GM12878 (cell line): ENCODE measurements at regions of chr5 and their contacts with region 1.

Region 1: DNA sequence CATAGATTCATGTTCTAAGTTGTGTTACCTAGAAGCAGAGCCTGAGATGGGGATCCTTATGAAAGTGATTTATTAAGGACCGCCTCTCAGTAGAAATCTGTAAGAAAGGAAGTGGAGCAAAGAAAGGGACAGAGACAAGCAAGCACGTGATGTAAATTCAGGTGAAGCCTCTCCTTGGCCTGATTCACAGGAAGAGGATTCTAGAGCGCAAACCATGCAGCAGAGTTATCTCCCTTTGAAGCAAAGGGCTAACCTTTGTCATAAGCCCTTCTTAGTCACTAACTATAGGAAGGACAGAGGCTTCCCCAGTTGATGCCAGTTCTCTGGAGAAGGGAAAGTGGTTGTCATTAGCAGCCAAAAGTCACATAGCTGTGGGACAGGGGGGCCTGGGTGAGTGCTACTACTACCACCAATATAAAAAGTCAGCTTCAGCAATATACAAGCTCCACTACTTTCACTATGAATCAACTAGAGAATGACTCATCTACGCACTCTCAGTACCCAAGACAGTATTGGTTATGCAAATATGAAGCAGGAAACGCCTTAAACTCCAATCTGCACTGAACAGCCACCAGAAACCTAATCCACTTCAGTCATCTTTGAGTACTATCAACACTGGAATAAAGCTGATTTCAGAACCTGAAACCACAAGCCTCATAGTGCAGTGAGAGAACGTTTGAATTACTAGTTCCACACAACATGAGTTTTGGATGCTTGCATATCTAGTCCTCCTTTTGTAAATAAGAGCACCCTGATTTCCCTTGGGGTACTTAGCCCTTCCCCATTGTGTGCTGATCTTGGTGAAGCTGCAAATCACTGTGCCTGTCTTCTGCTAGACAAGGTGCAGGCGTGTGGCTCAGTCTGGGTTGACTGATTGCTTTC is 162.7 kb downstream of the ZNF608 start:
- DNase-seq: peak; percentile 89
- ATAC-seq: peak; percentile 99
- H3K4me3 ChIP-seq: no peak overlapping the region
- H3K27ac ChIP-seq: peak overlapping the region; percentile 42
- H3K4me1 ChIP-seq: peaks cover 14% of the 10 kb centered on the region; the same call in 1 of the 2 replicates
- H3K27me3 ChIP-seq: peaks cover 0 to 8% of the 10 kb centered on the region in 2 experiments
- CTCF ChIP-seq: no peak
- EP300 ChIP-seq: peak; percentile 59 to 95; a peak in 3 of 4 replicates
- POLR2A ChIP-seq: no peak
- RAD21 ChIP-seq: no peak

Region 2: GRCh38 chr5:124056991-124057723 is 526.6 kb before region 1 on chr5:
- CTCF ChIA-PET with region 1: no interaction called
- POLR2A ChIA-PET with region 1: no interaction called
- RAD21 ChIA-PET with region 1: no interaction called
- SMC1A ChIA-PET with region 1: no interaction called
- in situ Hi-C with region 1: no loop called
- intact Hi-C with region 1: loop called (anchors 5 kb)
- DNase-seq: peak; percentile 47
- ATAC-seq: peak; percentile 76
- H3K4me3 ChIP-seq: peak overlapping the region; percentile 65; the same call in 1 of the 2 replicates
- H3K27ac ChIP-seq: peak overlapping the region; percentile 46
- H3K4me1 ChIP-seq: peaks cover 37% of the 10 kb centered on the region
- H3K27me3 ChIP-seq: no peaks in the 10 kb centered on the region
- CTCF ChIP-seq: no peak
- EP300 ChIP-seq: 0 out of 4 replicates have a peak, but pooled peaks of 1 of the 2 experiments have one; percentile 5
- POLR2A ChIP-seq: no peak
- RAD21 ChIP-seq: no peak

Region 3: GRCh38 chr5:124453221-124454051 is 130.3 kb before region 1 on chr5:
- CTCF ChIA-PET with region 1: no interaction called
- POLR2A ChIA-PET with region 1: no interaction called
- RAD21 ChIA-PET with region 1: no interaction called
- SMC1A ChIA-PET with region 1: interaction called, 3 read pairs
- in situ Hi-C with region 1: no loop called
- intact Hi-C with region 1: loop called (anchors 1 kb)
- DNase-seq: peak; percentile 83
- ATAC-seq: peak; percentile 98
- H3K4me3 ChIP-seq: no peak overlapping the region
- H3K27ac ChIP-seq: peak overlapping the region; percentile 40; the same call in 1 of the 2 replicates
- H3K4me1 ChIP-seq: peaks cover 19% of the 10 kb centered on the region
- H3K27me3 ChIP-seq: no peaks in the 10 kb centered on the region
- CTCF ChIP-seq: no peak
- EP300 ChIP-seq: no peak
- POLR2A ChIP-seq: no peak
- RAD21 ChIP-seq: no peak

Region 4: GRCh38 chr5:124524552-124525232 is 59.0 kb before region 1 on chr5:
- CTCF ChIA-PET with region 1: no interaction called
- POLR2A ChIA-PET with region 1: interaction called, 3 read pairs
- RAD21 ChIA-PET with region 1: no interaction called
- SMC1A ChIA-PET with region 1: no interaction called
- in situ Hi-C with region 1: no loop called
- intact Hi-C with region 1: loop called (anchors 5 kb)
- DNase-seq: peak; percentile 35
- ATAC-seq: peak; percentile 86
- H3K4me3 ChIP-seq: no peak overlapping the region
- H3K27ac ChIP-seq: no peak overlapping the region
- H3K4me1 ChIP-seq: peaks cover 20% of the 10 kb centered on the region
- H3K27me3 ChIP-seq: 0 out of 4 replicates have a peak, but pooled peaks cover 0 to 3% of the 10 kb centered on the region in 2 experiments
- CTCF ChIP-seq: peak; percentile 26 to 50 (median 30); a peak in 5 of 6 replicates
- EP300 ChIP-seq: no peak
- POLR2A ChIP-seq: no peak
- RAD21 ChIP-seq: peak; percentile 67

Region 5: GRCh38 chr5:124599028-124599973 is 15.6 kb after region 1 on chr5:
- CTCF ChIA-PET with region 1: no interaction called
- POLR2A ChIA-PET with region 1: no interaction called
- RAD21 ChIA-PET with region 1: interaction called, 5 read pairs
- SMC1A ChIA-PET with region 1: interaction called, 12 read pairs
- in situ Hi-C with region 1: no loop called
- intact Hi-C with region 1: no loop called
- DNase-seq: peak; percentile 13
- ATAC-seq: peak; percentile 42
- H3K4me3 ChIP-seq: no peak overlapping the region
- H3K27ac ChIP-seq: no peak overlapping the region
- H3K4me1 ChIP-seq: no peaks in the 10 kb centered on the region
- H3K27me3 ChIP-seq: no peaks in the 10 kb centered on the region; a peak in 2 of 4 replicates
- CTCF ChIP-seq: no peak
- EP300 ChIP-seq: no peak
- POLR2A ChIP-seq: no peak
- RAD21 ChIP-seq: no peak

Region 6: GRCh38 chr5:125140855-125141254 is 557.1 kb after region 1 on chr5:
- CTCF ChIA-PET with region 1: no interaction called
- POLR2A ChIA-PET with region 1: no interaction called
- RAD21 ChIA-PET with region 1: no interaction called
- SMC1A ChIA-PET with region 1: no interaction called
- in situ Hi-C with region 1: no loop called
- intact Hi-C with region 1: no loop called
- DNase-seq: no peak
- ATAC-seq: no peak
- H3K4me3 ChIP-seq: no peak overlapping the region
- H3K27ac ChIP-seq: no peak overlapping the region
- H3K4me1 ChIP-seq: no peaks in the 10 kb centered on the region
- H3K27me3 ChIP-seq: no peaks in the 10 kb centered on the region; a peak in 1 of 4 replicates
- CTCF ChIP-seq: no peak
- EP300 ChIP-seq: no peak
- POLR2A ChIP-seq: no peak
- RAD21 ChIP-seq: no peak